ENCODE measurements at regions of chr4 and their contacts with region 1.

Region 1: GRCh38 chr4:48944756-48945241 is 38.2 kb upstream of the OCIAD2 start:
- DNase-seq: peak; percentile 66
- ATAC-seq: peak; percentile 64
- H3K4me3 Mint-ChIP-seq: no peak overlapping the region
- H3K27ac Mint-ChIP-seq: no peak overlapping the region
- H3K4me1 Mint-ChIP-seq: peaks cover 17% of the 10 kb centered on the region
- H3K27me3 Mint-ChIP-seq: peaks cover 11% of the 10 kb centered on the region
- CTCF ChIP-seq: peak; percentile 71

Region 2: DNA sequence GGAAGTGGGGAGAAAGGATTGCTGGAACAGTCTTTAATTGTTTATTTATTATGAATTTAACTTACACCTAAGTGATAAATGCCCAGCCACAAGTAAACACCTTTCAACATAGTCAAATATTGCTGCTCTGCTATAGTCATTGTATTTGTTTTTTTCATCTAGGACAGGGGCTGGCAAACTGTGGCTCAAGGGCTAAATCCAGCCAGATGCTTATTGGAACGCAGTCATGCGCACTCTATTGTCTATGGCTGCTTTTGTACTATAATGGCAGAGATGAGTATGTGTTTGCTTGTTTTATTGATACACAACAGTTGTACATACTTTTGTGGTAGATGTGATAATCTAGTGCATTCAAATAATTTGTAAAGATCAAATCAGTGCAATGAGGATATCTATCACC is 359.4 kb before region 1 on chr4:
- CTCF ChIA-PET with region 1: no interaction called
- POLR2A ChIA-PET with region 1: no interaction called
- DNase-seq: no peak
- ATAC-seq: no peak
- H3K4me3 Mint-ChIP-seq: no peak overlapping the region
- H3K27ac Mint-ChIP-seq: no peak overlapping the region
- H3K4me1 Mint-ChIP-seq: no peaks in the 10 kb centered on the region
- H3K27me3 Mint-ChIP-seq: no peaks in the 10 kb centered on the region
- CTCF ChIP-seq: no peak

Region 3: GRCh38 chr4:48906206-48907173 is 38.3 kb before region 1 on chr4 and contains the start of gene OCIAD2:
- CTCF ChIA-PET with region 1: interaction called, 10 read pairs
- POLR2A ChIA-PET with region 1: no interaction called
- DNase-seq: peak; percentile 77
- ATAC-seq: peak; percentile 90
- H3K4me3 Mint-ChIP-seq: peak within 1 kb of the TSS; percentile 91
- H3K27ac Mint-ChIP-seq: peak within 1 kb of the TSS; percentile 86
- H3K4me1 Mint-ChIP-seq: peaks cover 25% of the 10 kb centered on the region
- H3K27me3 Mint-ChIP-seq: peaks cover 2% of the 10 kb centered on the region; the same call in 1 of the 2 replicates
- CTCF ChIP-seq: no peak
- total RNA-seq, gene OCIAD2: 82.7 to 103 TPM (median 91.3 TPM) in 3 replicates

Region 4: DNA sequence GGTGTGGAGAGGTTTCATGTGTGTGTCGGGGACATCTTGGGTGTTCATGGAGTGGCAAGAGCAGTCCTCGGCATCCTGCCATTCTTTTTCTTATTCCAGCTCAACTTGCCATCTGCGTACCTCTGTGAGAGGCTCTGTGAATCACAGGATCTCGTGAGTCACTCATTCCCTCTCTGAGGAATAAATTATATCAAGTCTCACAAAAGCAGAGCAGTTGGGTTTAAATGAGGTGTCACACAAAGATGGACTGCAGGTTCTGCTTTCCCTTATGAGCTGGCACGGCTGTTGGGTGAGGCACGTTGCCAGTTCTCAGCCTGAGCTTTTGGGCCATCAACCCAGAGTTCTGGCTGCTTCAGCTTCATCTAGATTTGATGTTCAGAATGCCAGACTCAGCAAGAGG is 31.5 kb before region 1 on chr4:
- CTCF ChIA-PET with region 1: interaction called, 13 read pairs
- POLR2A ChIA-PET with region 1: no interaction called
- DNase-seq: no peak
- ATAC-seq: no peak
- H3K4me3 Mint-ChIP-seq: no peak overlapping the region
- H3K27ac Mint-ChIP-seq: no peak overlapping the region
- H3K4me1 Mint-ChIP-seq: peaks cover 8% of the 10 kb centered on the region
- H3K27me3 Mint-ChIP-seq: peaks cover 2% of the 10 kb centered on the region; the same call in 1 of the 2 replicates
- CTCF ChIP-seq: no peak

Region 5: DNA sequence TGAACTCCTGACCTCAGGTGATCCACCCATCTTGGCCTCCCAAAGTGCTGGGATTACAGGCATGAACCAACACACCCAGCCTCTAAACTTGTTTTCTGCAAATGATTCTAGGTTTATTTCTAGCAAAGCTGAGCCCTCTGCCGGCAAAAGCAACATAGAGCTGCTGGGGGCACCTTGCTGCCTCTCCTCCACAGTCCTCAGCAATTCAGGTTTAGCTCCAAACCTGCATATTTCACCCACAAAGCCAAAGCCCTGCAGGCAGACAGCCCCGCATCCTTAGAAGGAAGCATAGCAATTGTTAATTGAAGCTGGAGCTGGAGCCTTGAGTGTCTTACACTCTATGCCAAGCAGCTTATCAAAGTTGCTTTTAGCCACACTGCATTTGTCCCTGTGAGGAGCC is 13.3 kb before region 1 on chr4:
- CTCF ChIA-PET with region 1: interaction called, 29 read pairs
- POLR2A ChIA-PET with region 1: no interaction called
- DNase-seq: no peak
- ATAC-seq: no peak; the same call in 1 of the 2 replicates
- H3K4me3 Mint-ChIP-seq: no peak overlapping the region
- H3K27ac Mint-ChIP-seq: no peak overlapping the region
- H3K4me1 Mint-ChIP-seq: no peaks in the 10 kb centered on the region
- H3K27me3 Mint-ChIP-seq: 0 out of 2 replicates have a peak, but pooled peaks cover 2% of the 10 kb centered on the region
- CTCF ChIP-seq: no peak

Region 6: GRCh38 chr4:48963042-48963679 is 18.4 kb after region 1 on chr4:
- CTCF ChIA-PET with region 1: interaction called, 57 read pairs
- POLR2A ChIA-PET with region 1: no interaction called
- DNase-seq: peak; percentile 75
- ATAC-seq: peak; percentile 85
- H3K4me3 Mint-ChIP-seq: no peak overlapping the region
- H3K27ac Mint-ChIP-seq: no peak overlapping the region
- H3K4me1 Mint-ChIP-seq: peaks cover 15% of the 10 kb centered on the region
- H3K27me3 Mint-ChIP-seq: peaks cover 2% of the 10 kb centered on the region; the same call in 1 of the 2 replicates
- CTCF ChIP-seq: peak; percentile 83